ENCODE measurements at regions of chr1 and their contacts with region 1.

Region 1: DNA sequence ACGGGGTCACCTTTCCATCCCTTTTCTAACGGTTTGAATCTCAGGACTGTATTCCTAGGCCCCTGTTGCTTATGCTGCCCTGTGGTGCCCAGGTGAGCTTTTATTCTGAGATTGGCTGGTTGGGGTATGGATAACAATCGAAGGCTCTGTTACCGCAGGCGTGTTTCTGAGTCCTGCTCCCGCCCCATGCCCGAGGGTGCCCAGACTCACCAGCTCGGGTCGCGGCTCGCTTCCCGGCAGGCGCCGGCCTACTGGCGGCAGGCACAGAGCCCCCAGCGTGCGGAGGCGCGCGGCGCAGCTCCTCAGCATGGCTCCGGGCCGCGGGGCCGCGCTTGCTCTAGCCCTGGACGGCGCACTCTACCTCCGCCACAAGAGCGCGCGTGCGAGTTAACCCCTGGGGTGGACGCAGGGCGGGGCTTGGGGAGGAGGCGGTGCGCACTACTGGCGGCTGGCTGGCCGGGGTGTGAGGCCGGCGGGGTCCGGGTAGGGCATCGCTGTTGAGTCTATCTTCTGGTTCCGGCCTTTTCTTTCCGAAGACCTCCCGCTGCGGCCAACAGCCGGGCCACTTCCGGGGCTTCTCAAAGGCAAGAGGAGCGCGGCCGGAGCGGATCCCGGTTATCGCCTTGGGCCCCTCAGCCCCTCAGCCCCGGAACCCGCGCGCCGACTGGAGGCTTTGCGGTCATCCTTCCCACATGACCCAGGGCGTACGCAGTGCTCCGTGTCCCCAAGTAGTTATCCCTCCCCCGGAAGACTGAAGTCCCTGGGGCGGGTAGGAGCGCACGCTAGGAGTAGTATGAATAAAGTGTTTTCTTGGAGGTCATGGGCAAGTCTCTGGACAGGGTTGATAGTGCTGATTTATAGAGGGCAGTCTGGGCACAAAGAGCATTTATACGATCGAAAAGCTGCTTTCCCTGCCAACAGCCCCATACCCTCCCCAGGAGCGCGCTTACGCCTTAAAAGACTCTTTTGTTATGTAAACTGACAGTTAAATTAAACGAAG is at the start of gene THEM4:
- DNase-seq: peak; percentile 96
- H3K4me3 ChIP-seq: peak within 1 kb of the TSS; percentile 73 to 81 (median 75)
- H3K27ac ChIP-seq: peak within 1 kb of the TSS; percentile 86
- H3K4me1 ChIP-seq: no peaks in the 10 kb centered on the region
- H3K27me3 ChIP-seq: no peaks in the 10 kb centered on the region
- CTCF ChIP-seq: no peak
- total RNA-seq, gene THEM4: 15.3 to 18.8 TPM

Region 2: GRCh38 chr1:151425103-151425502 is 484.3 kb before region 1 on chr1:
- CTCF ChIA-PET with region 1: no interaction called
- dilution Hi-C with region 1: no loop called
- in situ Hi-C with region 1: no loop called
- intact Hi-C with region 1: no loop called
- DNase-seq: no peak
- H3K4me3 ChIP-seq: no peak overlapping the region
- H3K27ac ChIP-seq: no peak overlapping the region
- H3K4me1 ChIP-seq: no peaks in the 10 kb centered on the region
- H3K27me3 ChIP-seq: no peaks in the 10 kb centered on the region
- CTCF ChIP-seq: no peak

Region 3: DNA sequence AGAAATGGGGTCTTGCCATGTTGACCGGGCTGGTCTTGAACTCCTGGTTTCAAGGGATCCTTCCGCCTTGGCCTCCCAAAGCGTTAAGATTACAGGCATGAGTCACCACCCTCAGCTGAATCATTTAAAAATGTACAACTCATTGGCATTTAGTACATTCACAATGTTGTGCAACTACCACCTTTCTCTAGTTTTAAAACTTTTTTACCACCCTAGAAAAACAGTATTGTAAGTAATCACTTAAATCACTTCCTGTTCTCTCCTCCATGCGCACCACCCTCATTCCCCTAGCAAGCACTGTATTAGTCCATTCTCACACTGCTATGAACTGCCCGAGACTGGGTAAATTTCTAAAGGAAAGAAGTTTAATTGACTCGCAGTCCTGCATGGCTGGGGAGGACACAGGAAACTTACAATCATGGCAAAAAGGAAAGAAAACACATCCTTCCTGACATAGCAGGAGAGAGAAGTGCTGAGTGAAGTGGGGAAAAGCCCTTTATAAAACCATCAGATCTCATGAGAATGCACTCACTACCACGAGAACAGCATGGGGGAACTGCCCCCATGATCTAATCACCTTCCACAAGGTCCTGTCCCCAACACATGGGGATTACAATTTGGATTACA is 41.6 kb before region 1 on chr1:
- CTCF ChIA-PET with region 1: no interaction called
- dilution Hi-C with region 1: no loop called
- in situ Hi-C with region 1: no loop called
- intact Hi-C with region 1: loop called (anchors 1 kb)
- DNase-seq: peak; percentile 83
- H3K4me3 ChIP-seq: no peak overlapping the region
- H3K27ac ChIP-seq: peak overlapping the region; percentile 23
- H3K4me1 ChIP-seq: peaks cover 16% of the 10 kb centered on the region
- H3K27me3 ChIP-seq: no peaks in the 10 kb centered on the region
- CTCF ChIP-seq: no peak

Region 4: GRCh38 chr1:151888972-151889570 is 20.4 kb before region 1 on chr1:
- CTCF ChIA-PET with region 1: no interaction called
- dilution Hi-C with region 1: no loop called
- in situ Hi-C with region 1: no loop called
- intact Hi-C with region 1: loop called (anchors 1 kb)
- DNase-seq: no peak
- H3K4me3 ChIP-seq: no peak overlapping the region
- H3K27ac ChIP-seq: no peak overlapping the region
- H3K4me1 ChIP-seq: peaks cover 30% of the 10 kb centered on the region
- H3K27me3 ChIP-seq: no peaks in the 10 kb centered on the region
- CTCF ChIP-seq: peak; percentile 15 to 49

Region 5: GRCh38 chr1:152167835-152168519 is 258.5 kb after region 1 on chr1:
- CTCF ChIA-PET with region 1: no interaction called
- dilution Hi-C with region 1: no loop called
- in situ Hi-C with region 1: no loop called
- intact Hi-C with region 1: loop called (anchors 10 kb)
- DNase-seq: peak; percentile 99
- H3K4me3 ChIP-seq: no peak overlapping the region
- H3K27ac ChIP-seq: peak overlapping the region; percentile 68
- H3K4me1 ChIP-seq: peaks cover 42% of the 10 kb centered on the region
- H3K27me3 ChIP-seq: no peaks in the 10 kb centered on the region
- CTCF ChIP-seq: no peak

Measured in mammary epithelial cell (primary cell).